ENCODE measurements at regions of chr12 and their contacts with region 1.

Region 1: GRCh38 chr12:86249851-86250250 is 6.3 kb downstream of the MGAT4C start:
- DNase-seq: peak; percentile 85
- H3K4me3 ChIP-seq: no peak overlapping the region
- H3K27ac ChIP-seq: peak overlapping the region; percentile 98
- H3K4me1 ChIP-seq: peaks cover 59% of the 10 kb centered on the region
- H3K27me3 ChIP-seq: no peaks in the 10 kb centered on the region
- CTCF ChIP-seq: no peak

Region 2: GRCh38 chr12:85356596-85357385 is 893.1 kb before region 1 on chr12:
- CTCF ChIA-PET with region 1: no interaction called
- POLR2A ChIA-PET with region 1: no interaction called
- intact Hi-C with region 1: loop called (anchors 5 kb)
- DNase-seq: peak; percentile 89
- H3K4me3 ChIP-seq: no peak overlapping the region
- H3K27ac ChIP-seq: peak overlapping the region; percentile 81
- H3K4me1 ChIP-seq: peaks cover 74% of the 10 kb centered on the region
- H3K27me3 ChIP-seq: no peaks in the 10 kb centered on the region
- CTCF ChIP-seq: no peak

Region 3: DNA sequence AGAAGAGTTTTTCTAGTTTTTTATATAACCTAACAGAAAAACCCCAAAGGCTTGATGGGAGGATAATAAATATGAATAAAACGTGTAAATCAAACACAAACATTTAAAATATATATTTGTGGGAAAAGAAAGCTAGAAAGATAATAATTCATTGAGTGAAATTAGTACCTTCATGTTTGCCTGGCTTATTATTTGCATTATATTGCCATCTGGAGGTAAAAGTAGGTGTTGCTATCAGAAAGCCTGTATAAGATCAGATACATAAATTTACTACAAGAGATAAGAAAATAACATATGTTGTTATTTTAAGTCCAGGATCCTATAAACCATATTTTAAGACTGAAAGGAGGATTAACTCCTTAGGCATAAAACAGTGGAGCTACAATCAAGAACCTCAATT is 298.0 kb before region 1 on chr12:
- CTCF ChIA-PET with region 1: no interaction called
- POLR2A ChIA-PET with region 1: no interaction called
- intact Hi-C with region 1: loop called (anchors 2 kb)
- DNase-seq: peak; percentile 66
- H3K4me3 ChIP-seq: no peak overlapping the region
- H3K27ac ChIP-seq: no peak overlapping the region
- H3K4me1 ChIP-seq: peaks cover 56% of the 10 kb centered on the region
- H3K27me3 ChIP-seq: no peaks in the 10 kb centered on the region
- CTCF ChIP-seq: peak; percentile 72

Region 4: GRCh38 chr12:86091681-86092080 is 158.2 kb before region 1 on chr12:
- CTCF ChIA-PET with region 1: no interaction called
- POLR2A ChIA-PET with region 1: no interaction called
- intact Hi-C with region 1: loop called (anchors 10 kb)
- DNase-seq: peak; percentile 54
- H3K4me3 ChIP-seq: no peak overlapping the region
- H3K27ac ChIP-seq: peak overlapping the region; percentile 8
- H3K4me1 ChIP-seq: peaks cover 34% of the 10 kb centered on the region
- H3K27me3 ChIP-seq: no peaks in the 10 kb centered on the region
- CTCF ChIP-seq: no peak

Region 5: DNA sequence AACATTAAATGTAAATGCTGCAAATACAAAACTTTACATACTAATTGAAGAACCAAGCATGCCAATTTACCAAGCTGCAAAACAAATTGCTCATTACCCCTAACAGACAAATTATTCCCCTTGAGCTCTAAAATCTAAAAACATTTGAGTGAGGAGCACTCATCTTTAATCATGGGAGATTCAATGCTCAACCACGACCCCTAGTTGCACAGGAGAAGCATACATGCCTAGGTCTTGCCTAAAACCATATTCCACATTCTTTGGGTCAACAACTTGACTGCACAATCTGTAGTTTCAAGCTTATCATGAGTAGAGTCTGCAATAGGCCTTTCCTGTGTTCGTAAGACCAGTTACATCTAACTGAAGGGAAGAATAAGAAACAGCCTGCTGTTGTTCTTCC is 63.4 kb before region 1 on chr12:
- CTCF ChIA-PET with region 1: no interaction called
- POLR2A ChIA-PET with region 1: no interaction called
- intact Hi-C with region 1: loop called (anchors 5 kb)
- DNase-seq: no peak
- H3K4me3 ChIP-seq: no peak overlapping the region
- H3K27ac ChIP-seq: no peak overlapping the region
- H3K4me1 ChIP-seq: peaks cover 32% of the 10 kb centered on the region
- H3K27me3 ChIP-seq: no peaks in the 10 kb centered on the region
- CTCF ChIP-seq: peak; percentile 35; the same call in 1 of the 2 replicates

Region 6: DNA sequence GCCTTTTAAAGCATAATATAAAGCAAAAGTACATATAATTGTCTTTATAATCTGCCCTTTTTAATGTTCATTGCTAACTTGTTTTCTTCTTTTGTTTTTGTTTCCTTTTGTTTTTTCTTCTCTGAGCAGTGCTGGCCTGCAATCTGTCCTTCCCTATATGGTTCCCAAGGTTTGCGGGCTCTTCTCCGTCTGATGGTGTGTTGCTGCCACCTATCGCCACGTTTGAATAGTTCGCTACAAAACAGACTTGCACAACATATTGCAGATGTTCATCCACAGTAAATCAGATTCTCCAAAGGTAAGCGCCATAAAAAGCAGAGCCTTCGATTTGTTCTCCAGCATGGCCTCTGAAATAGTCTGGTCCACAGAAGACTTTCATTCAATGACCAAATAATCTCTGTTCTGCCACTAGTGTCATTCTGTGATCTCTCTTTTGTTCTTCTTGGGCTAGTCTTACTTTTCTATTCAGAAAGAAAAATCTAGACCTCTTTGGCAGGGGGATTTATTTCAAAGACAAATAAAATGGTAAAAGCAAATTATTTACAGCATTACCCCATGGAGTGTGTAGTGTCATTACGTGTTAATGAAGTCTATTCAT is 1745.8 kb after region 1 on chr12:
- CTCF ChIA-PET with region 1: no interaction called
- POLR2A ChIA-PET with region 1: no interaction called
- intact Hi-C with region 1: loop called (anchors 10 kb)
- DNase-seq: peak; percentile 83
- H3K4me3 ChIP-seq: no peak overlapping the region
- H3K27ac ChIP-seq: no peak overlapping the region
- H3K4me1 ChIP-seq: no peaks in the 10 kb centered on the region
- H3K27me3 ChIP-seq: no peaks in the 10 kb centered on the region
- CTCF ChIP-seq: peak; percentile 87

Measured in A673 (cell line).